Adrenal gland (tissue), 19 donors: ENCODE measurements at regions of chr17 and their contacts with region 1.

Region 1: DNA sequence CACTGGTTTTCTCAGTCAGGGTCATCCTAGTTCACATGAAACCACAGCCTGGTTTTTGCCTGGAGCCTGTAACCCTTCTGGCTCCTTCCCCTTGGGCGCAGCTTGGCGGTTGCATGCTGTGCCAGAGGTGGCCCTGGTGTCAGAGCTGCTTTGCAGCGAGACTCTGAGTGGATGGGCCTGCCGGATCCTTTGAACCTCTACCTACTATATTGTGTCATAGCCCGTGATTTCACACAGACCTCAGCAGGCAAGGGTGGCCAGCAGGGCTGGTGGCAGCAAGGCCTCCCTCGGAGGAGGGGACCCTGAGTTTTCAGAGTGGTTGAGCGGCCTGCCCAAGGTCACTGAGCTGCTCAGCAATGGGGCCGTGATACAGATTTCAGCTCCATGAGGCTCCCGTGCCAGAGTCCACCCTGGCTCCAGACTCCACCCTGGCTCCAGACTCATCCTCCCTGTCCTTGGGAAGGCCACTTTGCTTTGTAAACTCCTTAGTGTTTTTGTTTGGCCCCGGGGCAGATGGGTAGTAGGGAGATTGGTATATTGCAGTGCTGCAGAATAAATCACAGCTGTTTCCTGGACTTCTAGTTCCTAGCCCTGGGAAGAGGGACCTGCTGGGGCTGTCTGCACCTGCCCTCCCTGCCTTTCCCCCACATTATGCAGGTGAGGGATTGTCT is 9.7 kb downstream of the MPRIP start:
- DNase-seq: peak; percentile 49 to 84 (median 78)
- H3K4me3 ChIP-seq: no peak overlapping the region
- H3K27ac ChIP-seq: peak overlapping the region; percentile 52 to 89 (median 65)
- H3K4me1 ChIP-seq: peaks cover 40 to 68% of the 10 kb centered on the region in 2 donors
- H3K27me3 ChIP-seq: no peaks in the 10 kb centered on the region
- CTCF ChIP-seq: peak in 1 of 6 experiments; percentile 13
- POLR2A ChIP-seq: no peak

Region 2: DNA sequence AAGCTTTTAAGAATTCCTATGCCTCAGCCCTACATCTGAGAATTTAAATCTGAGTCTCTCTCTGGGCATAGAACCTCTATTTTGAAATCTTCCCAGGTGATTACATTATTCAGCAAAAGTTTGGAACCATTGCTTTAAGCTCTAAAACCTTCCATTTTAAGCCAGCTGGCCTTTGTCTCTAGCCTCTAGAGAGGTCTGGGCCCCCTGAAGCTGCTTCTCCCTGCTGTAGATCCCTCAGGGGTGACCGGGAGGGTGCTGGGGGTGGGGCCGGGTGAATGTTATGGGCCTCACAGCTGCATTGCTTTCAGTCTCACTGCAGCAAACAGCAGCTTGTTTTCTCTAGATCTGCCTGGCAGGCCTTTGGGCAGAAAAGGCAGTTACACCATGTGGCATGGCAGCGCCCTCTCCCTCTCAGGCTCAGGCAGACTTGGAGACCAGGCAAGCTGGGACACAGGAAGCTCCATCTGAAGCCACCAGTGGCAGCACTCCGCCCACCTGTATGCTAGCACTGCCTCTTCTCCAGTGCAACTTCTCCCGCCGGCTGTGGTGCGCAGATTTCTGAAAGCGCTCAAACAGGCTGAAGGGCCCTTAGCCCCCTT is 56.6 kb after region 1 on chr17:
- intact Hi-C with region 1: loop called (anchors 5 kb)
- DNase-seq: peak in 4 of 7 donors; percentile 19 to 70 (median 42)
- H3K4me3 ChIP-seq: no peak overlapping the region
- H3K27ac ChIP-seq: peak overlapping the region in 4 of 5 donors; percentile 1 to 82 (median 70)
- H3K4me1 ChIP-seq: peaks cover 27 to 56% of the 10 kb centered on the region in 2 donors
- H3K27me3 ChIP-seq: no peaks in the 10 kb centered on the region
- CTCF ChIP-seq: no peak
- POLR2A ChIP-seq: no peak